ENCODE measurements at regions of chr15 and their contacts with region 1.

Region 1: GRCh38 chr15:94306700-94307650 is 75.6 kb downstream of the MCTP2 start:
- DNase-seq: peak; percentile 39
- H3K4me3 Mint-ChIP-seq: no peak overlapping the region
- H3K27ac Mint-ChIP-seq: peak overlapping the region; percentile 83
- H3K4me1 Mint-ChIP-seq: peaks cover 49% of the 10 kb centered on the region
- H3K27me3 Mint-ChIP-seq: no peaks in the 10 kb centered on the region

Region 2: GRCh38 chr15:94174399-94174802 is 132.6 kb before region 1 on chr15:
- CTCF ChIA-PET with region 1: interaction called, 3 read pairs
- POLR2A ChIA-PET with region 1: no interaction called
- intact Hi-C with region 1: loop called (anchors 1 kb)
- DNase-seq: peak; percentile 38
- H3K4me3 Mint-ChIP-seq: no peak overlapping the region
- H3K27ac Mint-ChIP-seq: no peak overlapping the region
- H3K4me1 Mint-ChIP-seq: peaks cover 10% of the 10 kb centered on the region
- H3K27me3 Mint-ChIP-seq: peaks cover 9% of the 10 kb centered on the region

Region 3: GRCh38 chr15:94272251-94272898 is 34.6 kb before region 1 on chr15:
- CTCF ChIA-PET with region 1: no interaction called
- POLR2A ChIA-PET with region 1: interaction called, 6 read pairs
- intact Hi-C with region 1: loop called (anchors 1 kb)
- DNase-seq: no peak
- H3K4me3 Mint-ChIP-seq: no peak overlapping the region
- H3K27ac Mint-ChIP-seq: no peak overlapping the region
- H3K4me1 Mint-ChIP-seq: peaks cover 20% of the 10 kb centered on the region
- H3K27me3 Mint-ChIP-seq: no peaks in the 10 kb centered on the region

Region 4: DNA sequence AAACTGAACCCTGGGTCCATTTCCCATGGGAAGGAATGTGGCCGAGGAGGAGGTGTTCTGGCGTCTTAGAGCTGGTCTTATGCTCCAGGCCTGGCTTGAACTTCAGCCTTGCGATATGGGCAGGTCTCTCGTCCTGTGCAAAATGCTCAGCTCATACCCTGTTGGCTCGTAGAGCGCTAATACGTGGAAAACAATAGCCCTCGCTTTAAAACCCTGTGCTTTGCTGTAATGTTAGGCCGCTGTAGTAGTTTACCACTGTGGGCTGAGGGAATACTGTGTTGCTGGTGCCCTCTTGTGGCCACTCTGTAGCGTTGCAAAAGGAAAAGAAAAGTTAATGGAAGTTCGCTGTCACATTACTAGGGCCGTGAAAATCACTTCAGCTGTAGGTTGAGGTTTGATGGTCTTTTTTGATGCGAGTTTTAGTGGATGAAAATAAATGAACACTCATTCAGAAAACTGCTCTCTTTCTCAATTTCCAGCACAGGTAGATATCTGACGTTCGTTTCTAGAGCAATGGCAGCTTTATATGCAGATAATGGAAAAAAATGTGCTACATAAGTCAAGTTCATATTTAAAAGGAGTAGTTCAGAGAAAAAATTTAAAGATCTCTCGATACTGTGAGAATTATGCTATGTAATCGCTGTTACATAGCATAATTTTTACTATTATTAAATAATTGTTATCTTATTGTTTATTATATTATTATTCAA is 17.3 kb after region 1 on chr15:
- CTCF ChIA-PET with region 1: interaction called, 21 read pairs
- POLR2A ChIA-PET with region 1: interaction called, 3 read pairs
- intact Hi-C with region 1: loop called (anchors 2 kb)
- DNase-seq: peak; percentile 73
- H3K4me3 Mint-ChIP-seq: no peak overlapping the region
- H3K27ac Mint-ChIP-seq: no peak overlapping the region
- H3K4me1 Mint-ChIP-seq: peaks cover 12% of the 10 kb centered on the region
- H3K27me3 Mint-ChIP-seq: no peaks in the 10 kb centered on the region

Measured in activated CD4-positive, alpha-beta memory T cell treated with anti-CD3 and anti-CD28 coated beads for 36 hours (primary cell).